Pancreas (tissue), 10 donors: ENCODE measurements at regions of chr1 and their contacts with region 1.

Region 1: DNA sequence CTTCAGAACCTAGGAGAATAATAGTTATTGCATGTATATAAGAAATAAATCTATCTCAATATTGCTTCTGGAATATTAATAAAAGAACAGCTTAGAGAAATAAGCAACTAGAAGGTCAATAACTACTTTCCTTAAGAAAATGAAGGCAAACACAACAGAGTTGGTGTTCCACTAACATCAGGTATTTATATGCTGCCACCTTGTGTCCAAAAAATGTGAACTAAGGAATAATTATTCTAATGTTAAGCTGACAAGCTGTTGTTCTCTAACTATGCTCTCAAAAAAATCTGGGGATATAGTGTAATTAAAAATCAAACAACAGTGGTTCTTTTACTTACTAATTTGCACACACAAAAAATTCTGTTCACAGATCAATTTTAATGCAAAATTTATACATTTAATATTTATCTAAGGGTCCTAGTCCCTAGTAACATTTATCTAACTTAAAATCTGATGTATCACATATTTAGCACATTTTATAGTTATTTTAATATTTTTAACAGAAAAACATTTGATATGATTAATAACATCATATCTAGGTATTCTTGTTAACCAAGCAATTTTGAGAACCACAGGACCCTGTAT is 39.6 kb downstream of the UCHL5 start:
- DNase-seq: no peak
- ATAC-seq: peak; percentile 72 to 91 (median 86)
- H3K4me3 ChIP-seq: no peak overlapping the region
- H3K27ac ChIP-seq: no peak overlapping the region
- H3K4me1 ChIP-seq: no peaks in the 10 kb centered on the region
- H3K27me3 ChIP-seq: no peaks in the 10 kb centered on the region
- CTCF ChIP-seq: peak in 1 of 4 donors; percentile 33

Region 2: GRCh38 chr1:192808518-192809306 is 210.8 kb before region 1 on chr1 and contains the start of gene RGS2:
- intact Hi-C with region 1: loop called in 2 of 3 experiments (anchors 5 to 10 kb)
- DNase-seq: peak; percentile 90 to 97 (median 95)
- ATAC-seq: peak; percentile 83 to 96 (median 94)
- H3K4me3 ChIP-seq: peak within 1 kb of the TSS; percentile 45 to 64 (median 54)
- H3K27ac ChIP-seq: peak within 1 kb of the TSS; percentile 78 to 98 (median 94)
- H3K4me1 ChIP-seq: peaks cover 8 to 42% (median 24%) of the 10 kb centered on the region in 3 donors
- H3K27me3 ChIP-seq: no peaks in the 10 kb centered on the region
- CTCF ChIP-seq: no peak
- total RNA-seq, gene RGS2: 9.2 to 534 (median 17.0) TPM